CD14-positive monocyte (primary cell): ENCODE measurements at regions of chr2 and their contacts with region 1.

Region 1: DNA sequence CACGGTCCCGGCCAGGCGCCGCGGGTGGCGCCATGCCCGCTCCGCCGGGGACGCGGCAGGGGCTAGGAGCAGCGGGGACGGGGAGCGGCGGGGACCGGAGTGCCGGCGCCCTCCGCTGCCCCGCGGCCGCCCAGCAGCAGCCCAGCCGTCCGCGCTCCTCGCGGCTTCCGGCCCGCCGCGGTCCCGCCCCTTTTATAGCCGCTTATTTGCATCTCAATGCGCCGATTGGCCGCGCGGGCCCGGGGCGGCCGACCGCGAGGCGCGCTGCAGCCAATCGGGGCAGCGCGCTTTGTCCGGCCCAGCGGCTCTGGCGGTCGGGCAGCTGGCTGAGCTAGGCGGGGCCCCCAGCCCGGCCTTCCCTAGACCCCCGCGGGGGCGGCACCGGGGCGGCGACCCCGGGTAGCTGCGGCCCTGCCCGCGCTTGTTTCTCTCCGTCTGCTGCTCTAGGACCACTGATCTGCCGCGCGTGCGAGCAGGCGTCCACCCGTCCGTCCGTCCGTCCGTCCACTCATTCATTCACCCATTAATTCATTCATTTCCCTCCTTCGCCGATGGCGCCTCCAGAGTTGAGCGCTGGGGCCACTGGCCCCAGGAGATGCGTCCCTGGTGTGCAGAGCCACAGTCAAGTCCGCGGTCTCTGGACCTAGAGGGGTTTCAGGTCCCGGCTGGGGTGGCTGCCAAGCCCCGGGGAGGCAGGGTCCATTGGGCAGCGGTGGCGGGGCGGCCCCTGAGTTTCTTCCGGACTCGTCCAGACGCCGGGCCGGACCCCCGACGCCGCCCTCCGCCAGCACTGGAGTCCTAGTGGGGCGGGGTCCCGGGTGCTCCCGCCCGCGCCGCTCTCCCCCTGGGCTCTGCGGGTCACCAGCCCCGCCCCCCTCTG is at the start of gene HES6:
- DNase-seq: peak; percentile 76 to 89 (median 85)
- H3K4me3 ChIP-seq: peak within 1 kb of the TSS; percentile 30 to 74 (median 44)
- H3K4me3 Mint-ChIP-seq: peak within 1 kb of the TSS; percentile 80 to 96
- H3K27ac ChIP-seq: no peak within 1 kb of the TSS
- H3K27ac Mint-ChIP-seq: peak within 1 kb of the TSS in 1 of 7 donors; percentile 62
- H3K4me1 ChIP-seq: peaks cover 20 to 31% of the 10 kb centered on the region in 2 donors
- H3K4me1 Mint-ChIP-seq: peaks cover 21% of the 10 kb centered on the region
- H3K27me3 ChIP-seq: peaks cover 30 to 66% of the 10 kb centered on the region in 2 donors
- H3K27me3 Mint-ChIP-seq: peaks cover 55 to 73% (median 57%) of the 10 kb centered on the region in 3 donors
- CTCF ChIP-seq: no peak
- polyA plus RNA-seq, gene HES6: 2.1 to 4.0 (median 2.8) TPM

Region 2: GRCh38 chr2:237966565-237967462 is 273.3 kb before region 1 on chr2 and contains the start of gene UBE2F:
- intact Hi-C with region 1: loop called in 1 of 2 experiments (anchors 10 kb)
- DNase-seq: peak; percentile 96 to 97 (median 96)
- H3K4me3 ChIP-seq: peak within 1 kb of the TSS; percentile 76 to 90 (median 87)
- H3K4me3 Mint-ChIP-seq: peak within 1 kb of the TSS; percentile 88
- H3K27ac ChIP-seq: peak within 1 kb of the TSS; percentile 71 to 79
- H3K27ac Mint-ChIP-seq: peak within 1 kb of the TSS; percentile 83 to 96 (median 92)
- H3K4me1 ChIP-seq: peaks cover 37 to 39% of the 10 kb centered on the region in 2 donors
- H3K4me1 Mint-ChIP-seq: peaks cover 37% of the 10 kb centered on the region
- H3K27me3 ChIP-seq: no peaks in the 10 kb centered on the region
- H3K27me3 Mint-ChIP-seq: peaks cover 0 to 2% (median 2%) of the 10 kb centered on the region in 3 donors
- CTCF ChIP-seq: no peak
- polyA plus RNA-seq, gene UBE2F: 51.1 to 120 (median 117) TPM

Region 3: DNA sequence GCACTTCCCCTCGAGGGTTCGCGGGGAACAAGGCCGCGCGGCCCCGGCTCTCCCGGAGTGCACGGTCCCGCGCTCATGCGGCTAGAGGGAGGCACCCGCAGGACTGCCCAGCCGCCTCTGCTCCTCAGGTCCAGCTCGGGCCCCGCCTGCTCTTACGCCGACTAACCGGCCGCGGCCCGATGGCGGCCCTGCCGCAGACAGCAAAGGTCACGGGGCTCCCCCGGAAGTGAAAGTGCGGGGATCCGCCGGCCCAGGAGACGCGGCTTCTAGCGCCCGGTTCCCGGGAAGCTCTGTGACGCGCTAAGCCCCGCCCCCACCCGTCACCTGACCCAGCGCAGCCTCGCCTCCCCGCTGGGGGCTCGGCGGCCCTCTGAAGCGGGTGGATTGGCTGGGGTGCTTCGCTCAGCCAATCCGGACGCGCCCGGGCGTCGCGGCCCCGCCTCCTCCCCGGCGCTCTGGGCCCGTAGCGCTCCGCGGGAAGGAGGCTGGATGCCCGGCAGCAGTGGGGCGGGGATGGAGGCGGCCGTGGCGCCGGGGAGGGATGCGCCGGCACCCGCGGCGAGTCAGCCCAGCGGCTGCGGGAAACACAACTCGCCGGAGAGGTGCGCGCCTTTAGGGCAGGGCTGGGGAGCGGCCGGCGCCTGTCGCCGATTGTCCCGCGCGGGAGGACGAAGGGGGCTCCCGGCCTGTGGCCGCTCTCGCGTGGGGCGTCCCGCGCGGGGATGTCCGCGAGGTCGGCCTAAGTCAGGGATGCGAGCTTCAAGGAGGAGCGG is 179.4 kb before region 1 on chr2 and contains the start of gene SCLY:
- intact Hi-C with region 1: loop called in 1 of 2 experiments (anchors 5 kb)
- DNase-seq: peak; percentile 98
- H3K4me3 ChIP-seq: peak within 1 kb of the TSS; percentile 74 to 88 (median 82)
- H3K4me3 Mint-ChIP-seq: peak within 1 kb of the TSS; percentile 90 to 94
- H3K27ac ChIP-seq: peak within 1 kb of the TSS; percentile 66 to 91
- H3K27ac Mint-ChIP-seq: peak within 1 kb of the TSS; percentile 82 to 95 (median 90)
- H3K4me1 ChIP-seq: peaks cover 17 to 23% of the 10 kb centered on the region in 2 donors
- H3K4me1 Mint-ChIP-seq: peaks cover 22% of the 10 kb centered on the region
- H3K27me3 ChIP-seq: peaks cover 3 to 19% of the 10 kb centered on the region in 2 donors
- H3K27me3 Mint-ChIP-seq: peaks cover 8 to 24% (median 22%) of the 10 kb centered on the region in 3 donors
- CTCF ChIP-seq: no peak
- polyA plus RNA-seq, gene SCLY: 9.5 to 10.6 (median 10.3) TPM

Region 4: DNA sequence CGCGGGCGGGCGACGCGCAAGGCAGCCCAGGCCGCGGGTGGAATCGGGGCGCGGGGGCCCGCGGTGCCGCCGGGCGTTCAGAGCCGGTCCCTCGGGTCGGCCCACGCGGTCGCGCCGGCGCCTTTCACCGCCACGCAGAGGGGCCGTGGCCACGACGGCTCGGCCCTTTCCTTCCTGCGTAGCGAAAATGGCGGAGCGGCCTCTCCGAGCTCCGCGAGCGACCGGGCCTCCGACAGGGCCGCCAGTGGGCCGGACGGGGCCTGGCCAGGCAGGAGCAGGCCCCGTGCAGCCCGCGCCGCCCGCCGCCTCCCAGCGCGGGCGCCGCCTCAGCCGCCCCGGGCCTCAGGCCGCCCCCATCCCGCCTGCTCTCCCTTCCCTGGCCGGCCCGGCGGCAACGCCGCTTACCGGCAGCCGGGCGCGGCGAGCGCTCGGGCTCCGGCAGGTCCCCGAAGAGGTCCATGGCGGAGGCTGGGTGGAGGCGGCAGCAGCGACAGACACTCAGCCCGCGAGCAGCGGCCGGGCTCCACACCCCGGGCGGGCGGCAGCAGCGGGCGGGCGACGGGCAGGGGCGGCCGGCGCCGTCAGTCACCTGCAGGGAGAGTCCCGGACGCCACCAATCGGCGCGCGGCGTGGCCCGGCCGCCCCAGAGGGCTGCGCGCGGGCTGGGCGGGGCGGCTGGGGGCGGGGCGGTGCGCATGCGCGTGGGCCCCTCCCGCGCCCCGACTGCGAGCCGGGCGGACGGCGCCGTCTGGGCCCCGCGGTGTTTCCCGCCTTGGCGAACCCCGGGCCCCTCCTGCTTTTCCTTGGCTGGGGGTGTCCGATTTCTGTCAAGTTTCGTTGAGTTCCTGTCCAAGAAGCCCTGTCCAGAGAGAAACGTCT is 36.8 kb before region 1 on chr2 and contains the start of gene ILKAP:
- intact Hi-C with region 1: loop called (anchors 5 kb)
- DNase-seq: peak; percentile 73 to 85 (median 81)
- H3K4me3 ChIP-seq: peak within 1 kb of the TSS; percentile 61 to 81 (median 72)
- H3K4me3 Mint-ChIP-seq: peak within 1 kb of the TSS; percentile 85 to 89
- H3K27ac ChIP-seq: peak within 1 kb of the TSS; percentile 43 to 84
- H3K27ac Mint-ChIP-seq: peak within 1 kb of the TSS; percentile 80 to 92 (median 85)
- H3K4me1 ChIP-seq: peaks cover 25 to 29% of the 10 kb centered on the region in 2 donors
- H3K4me1 Mint-ChIP-seq: peaks cover 42% of the 10 kb centered on the region
- H3K27me3 ChIP-seq: peaks cover 0 to 4% of the 10 kb centered on the region in 2 donors
- H3K27me3 Mint-ChIP-seq: peaks cover 4 to 6% (median 5%) of the 10 kb centered on the region in 3 donors
- CTCF ChIP-seq: no peak
- polyA plus RNA-seq, gene ILKAP: 23.2 to 44.2 (median 29.3) TPM

Region 5: GRCh38 chr2:238288650-238289573 is 48.8 kb after region 1 on chr2:
- intact Hi-C with region 1: loop called in 1 of 2 experiments (anchors 2 kb)
- DNase-seq: peak; percentile 99
- H3K4me3 ChIP-seq: peak overlapping the region; percentile 50 to 80 (median 60)
- H3K4me3 Mint-ChIP-seq: peak overlapping the region; percentile 84 to 89
- H3K27ac ChIP-seq: peak overlapping the region; percentile 43 to 92
- H3K27ac Mint-ChIP-seq: peak overlapping the region; percentile 85 to 94 (median 90)
- H3K4me1 ChIP-seq: peaks cover 21 to 24% of the 10 kb centered on the region in 2 donors
- H3K4me1 Mint-ChIP-seq: peaks cover 36% of the 10 kb centered on the region
- H3K27me3 ChIP-seq: no peaks in the 10 kb centered on the region
- H3K27me3 Mint-ChIP-seq: peaks cover 2 to 5% (median 4%) of the 10 kb centered on the region in 3 donors
- CTCF ChIP-seq: peak; percentile 37